ENCODE measurements at regions of chr10 and their contacts with region 1.

Region 1: DNA sequence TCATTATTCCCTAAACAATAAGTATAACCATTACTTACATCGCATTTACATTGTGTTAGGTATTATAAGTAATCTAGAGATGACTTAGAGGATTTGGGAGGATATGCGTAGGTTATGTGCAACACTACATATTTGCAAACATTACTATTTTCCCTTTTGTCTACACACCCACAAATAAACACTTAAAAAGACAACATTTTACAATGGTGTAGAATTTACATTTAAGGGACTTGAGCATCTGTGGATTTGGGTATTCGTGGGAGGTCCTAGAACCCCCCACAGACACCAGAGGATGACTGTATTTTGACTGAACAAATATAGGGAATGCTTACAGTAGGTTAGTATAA is 220.2 kb upstream of the MYO3A start:
- DNase-seq: no peak
- ATAC-seq: no peak
- H3K4me3 ChIP-seq: no peak overlapping the region
- H3K27ac ChIP-seq: no peak overlapping the region
- H3K4me1 ChIP-seq: no peaks in the 10 kb centered on the region
- H3K27me3 ChIP-seq: no peaks in the 10 kb centered on the region
- CTCF ChIP-seq: no peak

Region 2: GRCh38 chr10:25113191-25114035 is 600.5 kb before region 1 on chr10:
- CTCF ChIA-PET with region 1: no interaction called
- POLR2A ChIA-PET with region 1: no interaction called
- intact Hi-C with region 1: loop called (anchors 2 kb)
- DNase-seq: peak; percentile 87
- ATAC-seq: peak; percentile 89
- H3K4me3 ChIP-seq: peak overlapping the region; percentile 42
- H3K27ac ChIP-seq: peak overlapping the region; percentile 94
- H3K4me1 ChIP-seq: peaks cover 17% of the 10 kb centered on the region
- H3K27me3 ChIP-seq: no peaks in the 10 kb centered on the region
- CTCF ChIP-seq: peak; percentile 87

Region 3: GRCh38 chr10:25226775-25227682 is 486.8 kb before region 1 on chr10:
- CTCF ChIA-PET with region 1: no interaction called
- POLR2A ChIA-PET with region 1: no interaction called
- intact Hi-C with region 1: no loop called
- DNase-seq: peak; percentile 59
- ATAC-seq: peak; percentile 45
- H3K4me3 ChIP-seq: no peak overlapping the region
- H3K27ac ChIP-seq: no peak overlapping the region
- H3K4me1 ChIP-seq: no peaks in the 10 kb centered on the region
- H3K27me3 ChIP-seq: peaks cover 5% of the 10 kb centered on the region; the same call in 1 of the 2 replicates
- CTCF ChIP-seq: peak; percentile 75

Measured in PC-3 (cell line).